ENCODE measurements at regions of chr17 and their contacts with region 1.

Region 1: DNA sequence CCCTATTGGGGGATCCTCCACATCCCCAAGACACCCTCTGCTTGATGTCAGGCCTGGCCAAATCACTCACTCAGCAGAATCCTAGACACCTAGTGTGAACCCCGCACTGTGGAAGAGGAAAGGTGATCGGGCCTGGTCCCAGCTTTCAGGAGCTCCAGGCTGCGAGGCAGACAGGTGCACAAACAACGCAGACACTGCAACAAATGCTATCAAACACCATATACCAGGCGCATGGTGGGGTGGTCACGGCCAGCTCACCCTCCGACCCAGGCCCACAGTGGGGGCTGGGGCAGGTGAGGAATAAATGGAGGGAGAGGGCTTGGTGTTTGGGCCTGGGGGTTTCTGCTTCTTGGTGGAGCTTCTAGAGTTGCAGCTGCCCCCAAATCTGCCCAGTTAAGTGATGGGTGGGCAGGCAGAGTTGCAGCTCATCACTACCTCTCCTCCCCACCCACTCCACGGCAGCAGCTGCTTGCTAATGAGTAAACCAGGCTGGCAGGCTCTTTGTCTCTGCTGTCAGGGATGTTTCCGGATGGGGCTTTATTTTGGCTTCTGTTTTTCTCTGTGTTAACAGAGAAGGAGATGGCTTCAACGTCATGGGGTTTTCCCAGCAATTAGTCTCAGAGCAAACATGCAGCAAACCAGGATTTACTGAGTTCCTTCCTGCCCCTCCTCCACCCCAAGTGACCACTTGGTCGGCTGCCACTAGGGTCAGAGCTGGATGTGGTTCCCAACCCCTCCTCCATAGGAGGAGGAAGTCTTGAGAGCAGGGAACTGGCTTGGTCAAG is 46.6 kb downstream of the PECAM1 start:
- DNase-seq: peak; percentile 81 to 92
- ATAC-seq: peak; percentile 86 to 92 (median 89)
- H3K4me3 ChIP-seq: peak overlapping the region in 1 of 10 donors; percentile 3
- H3K27ac ChIP-seq: peak overlapping the region; percentile 63 to 95 (median 78)
- H3K4me1 ChIP-seq: peaks cover 14 to 85% (median 49%) of the 10 kb centered on the region in 9 donors
- H3K27me3 ChIP-seq: no peaks in the 10 kb centered on the region
- CTCF ChIP-seq: no peak

Region 2: GRCh38 chr17:64326395-64327054 is 17.5 kb before region 1 on chr17:
- intact Hi-C with region 1: loop called in 1 of 10 experiments (anchors 2 kb)
- DNase-seq: peak; percentile 78 to 84
- ATAC-seq: peak; percentile 65 to 93 (median 70)
- H3K4me3 ChIP-seq: peak overlapping the region in 1 of 10 donors; percentile 15
- H3K27ac ChIP-seq: peak overlapping the region; percentile 69 to 95 (median 87)
- H3K4me1 ChIP-seq: peaks cover 20 to 91% (median 71%) of the 10 kb centered on the region in 9 donors
- H3K27me3 ChIP-seq: no peaks in the 10 kb centered on the region
- CTCF ChIP-seq: no peak

Region 3: DNA sequence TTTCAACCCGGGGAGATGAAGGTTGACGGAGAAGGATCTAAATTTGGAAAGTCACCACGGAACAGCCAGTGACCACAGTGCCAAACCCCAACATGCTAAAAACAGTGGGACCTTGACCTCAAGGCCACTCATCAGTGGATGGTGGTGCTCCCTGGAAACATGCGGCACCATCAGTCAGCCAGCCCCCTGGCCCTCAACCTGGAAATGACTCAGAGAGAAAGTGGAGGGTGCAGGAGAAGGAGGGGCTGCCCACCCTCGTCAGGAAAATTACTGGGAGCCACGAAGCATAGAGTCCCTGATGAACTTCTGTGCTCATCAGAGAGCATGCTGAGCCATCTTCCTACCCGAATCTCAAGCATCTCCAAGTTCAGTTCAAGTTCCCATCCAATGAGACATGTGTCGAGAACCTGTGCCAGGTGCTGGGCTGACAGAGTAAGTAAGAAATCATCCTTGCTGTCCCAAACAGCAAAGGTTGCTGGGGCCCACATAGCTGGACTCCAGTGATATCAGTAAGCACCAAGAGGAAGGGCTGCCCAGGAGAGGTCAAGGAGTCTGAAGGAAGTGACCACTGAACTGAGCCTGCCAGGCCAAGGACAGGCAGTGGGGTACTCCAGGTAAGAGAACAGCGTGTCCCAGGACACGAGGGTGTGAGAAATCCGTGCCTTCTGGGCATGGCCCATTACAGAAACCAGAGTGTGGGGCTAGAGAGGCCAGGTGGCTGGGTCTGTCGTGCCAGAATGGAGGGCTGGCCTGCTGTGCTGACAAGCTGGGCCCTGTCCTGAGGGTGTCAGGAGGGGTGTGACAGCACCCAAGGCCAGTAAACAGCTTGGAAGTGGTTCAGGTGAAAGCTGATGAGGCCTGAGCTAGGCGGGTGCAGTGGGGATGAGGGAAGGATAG is 41.4 kb after region 1 on chr17:
- intact Hi-C with region 1: loop called in 2 of 10 experiments (anchors 2 to 10 kb)
- DNase-seq: peak; percentile 31 to 67
- ATAC-seq: peak; percentile 53 to 89 (median 75)
- H3K4me3 ChIP-seq: peak overlapping the region in 8 of 10 donors; percentile 0 to 58 (median 50)
- H3K27ac ChIP-seq: peak overlapping the region; percentile 54 to 89 (median 85)
- H3K4me1 ChIP-seq: peaks cover 7 to 97% (median 56%) of the 10 kb centered on the region in 9 donors
- H3K27me3 ChIP-seq: no peaks in the 10 kb centered on the region
- CTCF ChIP-seq: no peak

Region 4: DNA sequence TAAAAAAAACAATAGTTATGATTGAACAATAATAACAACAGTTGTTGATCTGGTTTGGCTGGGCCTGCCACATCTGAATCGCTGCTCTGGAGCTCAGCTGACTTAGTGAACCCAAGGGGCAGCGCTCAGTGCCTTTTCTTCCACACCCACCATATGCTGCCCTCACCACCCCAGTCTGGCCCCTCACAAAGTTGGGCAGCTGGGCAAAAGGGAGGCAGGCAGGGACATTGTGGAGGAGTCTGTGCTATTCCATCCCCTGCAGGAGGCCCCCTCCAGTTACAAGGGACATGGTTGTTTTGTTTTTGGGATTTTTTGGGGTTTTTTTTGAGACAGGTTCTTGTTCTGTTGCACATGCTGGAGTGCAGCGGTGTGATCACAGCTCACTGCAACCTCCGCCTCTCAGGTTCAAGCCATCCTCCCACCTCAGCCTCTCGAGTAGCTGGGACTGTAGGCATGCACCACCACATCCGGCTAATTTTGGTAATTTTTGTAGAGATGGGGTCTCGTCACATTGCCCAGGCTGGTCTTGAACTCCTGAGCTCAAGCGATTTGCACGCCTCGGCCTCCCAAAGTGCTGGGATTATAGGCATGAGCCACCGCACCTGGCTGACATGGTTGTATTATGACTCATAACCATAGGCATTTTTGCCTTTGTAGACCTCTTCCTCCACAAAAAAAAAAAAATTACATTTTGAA is 55.2 kb after region 1 on chr17:
- intact Hi-C with region 1: loop called in 1 of 10 experiments (anchors 10 kb)
- DNase-seq: no peak
- ATAC-seq: no peak
- H3K4me3 ChIP-seq: no peak overlapping the region
- H3K27ac ChIP-seq: no peak overlapping the region
- H3K4me1 ChIP-seq: peaks cover 0 to 75% (median 0%) of the 10 kb centered on the region in 9 donors
- H3K27me3 ChIP-seq: no peaks in the 10 kb centered on the region
- CTCF ChIP-seq: no peak